Gastrocnemius medialis (tissue), 4 donors: ENCODE measurements at regions of chr11 and their contacts with region 1.

Region 1: GRCh38 chr11:88543902-88544655 is 206.5 kb upstream of the CTSC start:
- DNase-seq: peak; percentile 28 to 48
- ATAC-seq: peak; percentile 86 to 90
- H3K4me3 ChIP-seq: no peak overlapping the region
- H3K27ac ChIP-seq: no peak overlapping the region
- H3K4me1 ChIP-seq: no peaks in the 10 kb centered on the region
- H3K27me3 ChIP-seq: no peaks in the 10 kb centered on the region
- CTCF ChIP-seq: peak; percentile 60 to 84 (median 79)
- POLR2A ChIP-seq: no peak

Region 2: DNA sequence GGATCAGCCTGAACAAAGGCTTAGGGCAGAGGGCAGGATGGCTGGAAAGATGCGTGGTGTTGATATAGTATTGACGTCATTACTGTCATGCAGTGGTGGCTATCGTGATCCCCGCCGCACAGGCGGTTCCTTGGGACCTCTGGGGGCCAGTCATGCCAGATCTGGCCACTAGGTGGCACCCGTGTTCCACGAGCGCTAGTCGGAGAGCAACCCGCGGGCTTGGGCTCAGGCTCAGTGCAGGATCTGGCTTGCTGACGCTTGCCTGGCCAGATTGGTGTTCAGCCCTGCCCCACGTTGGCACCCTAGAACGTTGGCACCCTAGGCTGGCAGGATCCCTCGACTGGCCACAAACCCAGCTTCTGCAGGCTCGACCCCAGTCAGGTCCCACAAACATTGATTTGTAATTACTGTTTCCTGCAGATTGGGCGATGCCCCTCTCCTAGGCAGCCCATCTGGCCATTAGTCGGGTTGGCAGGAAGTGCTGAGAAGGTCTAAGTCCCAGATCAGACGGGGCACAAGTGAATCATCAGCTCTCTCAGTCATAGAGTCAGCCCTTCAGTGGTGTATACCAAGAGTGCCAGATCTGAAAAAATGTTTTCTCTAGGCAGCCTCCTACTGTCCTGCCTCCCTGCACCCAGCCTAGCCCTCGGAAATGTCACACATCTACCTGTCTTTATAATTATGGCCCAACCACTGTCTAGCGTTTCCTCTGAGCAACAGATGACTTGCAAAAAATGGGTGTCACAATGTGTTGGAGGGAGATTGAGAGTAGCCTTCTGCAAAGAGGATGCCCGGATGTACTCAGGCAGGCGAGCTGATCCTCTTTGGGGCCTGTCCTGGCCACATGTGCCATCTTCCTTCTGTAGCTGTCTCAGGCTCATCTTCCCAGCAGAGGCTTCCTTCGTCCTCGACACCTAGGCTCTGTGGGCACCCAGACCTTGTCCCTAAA is 1191.0 kb before region 1 on chr11:
- in situ Hi-C with region 1: loop called in 3 of 4 experiments (anchors 10 to 25 kb)
- intact Hi-C with region 1: loop called (anchors 2 kb)
- DNase-seq: peak; percentile 58 to 64
- ATAC-seq: peak; percentile 86 to 91
- H3K4me3 ChIP-seq: peak overlapping the region in 1 of 4 donors; percentile 31
- H3K27ac ChIP-seq: no peak overlapping the region
- H3K4me1 ChIP-seq: peaks cover 0 to 21% of the 10 kb centered on the region in 2 donors
- H3K27me3 ChIP-seq: no peaks in the 10 kb centered on the region
- CTCF ChIP-seq: peak; percentile 95 to 100 (median 98)
- POLR2A ChIP-seq: no peak

Region 3: GRCh38 chr11:88016392-88017170 is 527.5 kb before region 1 on chr11:
- in situ Hi-C with region 1: loop called (anchors 25 kb)
- intact Hi-C with region 1: loop called (anchors 1 kb)
- DNase-seq: peak; percentile 26 to 39
- ATAC-seq: peak in 1 of 2 donors; percentile 58
- H3K4me3 ChIP-seq: no peak overlapping the region
- H3K27ac ChIP-seq: no peak overlapping the region
- H3K4me1 ChIP-seq: peaks cover 0 to 9% of the 10 kb centered on the region in 2 donors
- H3K27me3 ChIP-seq: no peaks in the 10 kb centered on the region
- CTCF ChIP-seq: peak; percentile 30 to 69 (median 60)
- POLR2A ChIP-seq: no peak

Region 4: DNA sequence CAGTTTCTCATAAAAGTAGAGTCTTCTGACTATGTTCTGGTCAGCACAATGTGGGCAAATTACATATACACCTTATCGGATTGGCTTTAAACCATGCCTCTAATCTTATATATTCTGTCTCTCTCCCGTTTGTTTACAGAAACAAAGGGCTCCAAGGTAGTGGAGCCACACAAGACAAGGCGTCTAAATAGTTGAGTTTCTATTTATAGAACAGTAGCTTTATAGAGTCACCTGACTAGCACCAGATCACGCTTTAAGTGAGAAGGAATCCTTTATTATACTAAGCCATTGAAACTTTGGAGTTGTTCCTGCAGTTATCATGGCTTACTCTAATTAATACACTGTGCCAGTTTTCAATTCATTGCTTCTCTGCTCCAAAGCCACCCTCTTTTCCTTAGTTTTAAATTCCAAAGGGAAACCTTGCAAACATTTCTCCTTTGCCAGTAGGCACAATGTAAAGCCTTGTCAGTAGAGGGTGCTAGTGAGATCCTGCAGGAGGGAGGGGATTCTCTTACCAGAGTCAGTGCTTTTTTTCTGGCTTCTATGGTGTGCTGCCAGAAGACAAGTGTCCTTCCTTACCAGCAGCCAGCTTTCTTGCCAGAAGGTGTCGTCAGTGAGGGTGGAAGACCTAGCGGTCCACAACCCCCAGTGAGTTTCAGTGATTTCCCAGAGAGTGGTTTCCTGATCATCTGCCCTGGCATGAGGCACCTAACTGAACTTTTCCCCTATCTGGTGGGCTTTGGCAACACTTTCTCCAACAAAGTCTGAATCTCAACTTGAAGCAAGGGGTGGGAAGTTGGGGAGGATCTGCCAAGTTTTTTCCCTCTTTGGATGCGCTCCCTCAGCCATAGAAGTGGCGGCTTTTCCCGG is 440.5 kb before region 1 on chr11:
- in situ Hi-C with region 1: no loop called
- intact Hi-C with region 1: loop called (anchors 10 kb)
- DNase-seq: no peak
- ATAC-seq: no peak
- H3K4me3 ChIP-seq: no peak overlapping the region
- H3K27ac ChIP-seq: no peak overlapping the region
- H3K4me1 ChIP-seq: no peaks in the 10 kb centered on the region
- H3K27me3 ChIP-seq: no peaks in the 10 kb centered on the region
- CTCF ChIP-seq: peak in 1 of 5 experiments; percentile 29
- POLR2A ChIP-seq: no peak

Region 5: GRCh38 chr11:88231894-88232482 is 312.1 kb before region 1 on chr11:
- in situ Hi-C with region 1: loop called in 2 of 4 experiments (anchors 5 to 10 kb)
- intact Hi-C with region 1: loop called (anchors 1 kb)
- DNase-seq: no peak
- ATAC-seq: no peak
- H3K4me3 ChIP-seq: no peak overlapping the region
- H3K27ac ChIP-seq: no peak overlapping the region
- H3K4me1 ChIP-seq: no peaks in the 10 kb centered on the region
- H3K27me3 ChIP-seq: no peaks in the 10 kb centered on the region
- CTCF ChIP-seq: peak in 4 of 5 experiments; percentile 24 to 63 (median 46)
- POLR2A ChIP-seq: no peak

Region 6: DNA sequence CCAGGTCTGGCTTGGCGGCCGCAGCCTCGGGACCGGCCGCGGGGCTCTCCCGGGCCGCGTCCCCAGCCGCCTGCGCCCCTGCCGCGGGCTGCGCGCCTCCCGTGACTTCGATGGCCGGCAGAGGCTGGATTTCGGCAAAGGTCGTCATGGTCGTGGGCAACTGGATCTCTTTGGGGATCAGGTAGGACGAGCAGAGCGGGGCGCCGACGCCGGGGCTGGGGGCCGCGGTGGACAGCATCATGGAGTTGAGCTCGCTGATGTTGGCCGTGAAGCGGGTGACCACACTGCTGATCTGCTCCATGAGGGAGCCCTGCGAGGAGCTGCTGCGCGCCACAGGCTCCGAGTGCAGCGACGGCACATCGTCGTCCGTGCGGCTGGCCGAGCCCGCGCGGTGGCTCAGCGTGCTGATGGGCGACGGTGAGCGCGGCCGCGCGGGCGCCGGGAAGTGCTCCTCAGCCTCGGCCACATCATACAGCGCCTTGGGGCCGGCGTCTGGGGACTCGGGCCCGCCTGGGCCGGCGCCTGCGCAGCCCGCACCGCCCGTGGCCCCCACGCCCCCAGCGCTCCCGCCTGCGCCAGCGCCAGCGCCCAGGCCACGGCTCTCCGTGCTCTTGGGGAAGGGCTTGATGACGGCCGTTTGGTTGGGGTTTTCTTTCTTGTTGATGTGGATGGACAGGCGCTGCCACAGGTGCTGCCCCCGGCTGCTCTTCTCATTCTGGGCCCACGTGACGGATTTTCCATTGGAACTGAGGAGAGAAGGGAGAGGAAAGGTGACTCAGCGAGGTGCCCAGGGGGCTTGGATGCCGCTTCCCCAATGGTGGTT is 35.1 kb before region 1 on chr11:
- in situ Hi-C with region 1: no loop called
- intact Hi-C with region 1: no loop called
- DNase-seq: no peak
- ATAC-seq: no peak
- H3K4me3 ChIP-seq: peak overlapping the region; percentile 30 to 44 (median 36)
- H3K27ac ChIP-seq: no peak overlapping the region
- H3K4me1 ChIP-seq: no peaks in the 10 kb centered on the region
- H3K27me3 ChIP-seq: peaks cover 0 to 30% (median 12%) of the 10 kb centered on the region in 3 donors
- CTCF ChIP-seq: no peak
- POLR2A ChIP-seq: no peak

Region 7: DNA sequence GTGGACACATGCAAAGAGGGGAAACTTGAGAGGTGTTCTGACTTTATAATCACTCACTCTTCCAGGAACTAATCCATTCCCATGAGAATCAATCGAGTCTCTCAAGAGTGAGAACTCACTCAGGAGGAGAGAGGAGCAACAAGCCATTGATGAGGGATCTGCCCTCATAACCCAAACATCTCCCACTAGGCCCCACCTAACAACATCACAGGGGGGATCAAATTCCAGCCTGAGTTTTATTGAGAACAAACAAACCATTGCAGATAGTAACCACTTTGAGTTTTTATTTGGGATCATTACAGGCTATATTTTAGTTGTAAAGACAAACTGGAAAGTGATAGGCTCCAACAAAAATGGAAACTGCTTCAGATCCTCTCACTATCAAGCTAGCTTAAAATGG is 122.3 kb after region 1 on chr11:
- in situ Hi-C with region 1: no loop called
- intact Hi-C with region 1: no loop called
- DNase-seq: no peak
- ATAC-seq: no peak
- H3K4me3 ChIP-seq: no peak overlapping the region
- H3K27ac ChIP-seq: no peak overlapping the region
- H3K4me1 ChIP-seq: no peaks in the 10 kb centered on the region
- H3K27me3 ChIP-seq: no peaks in the 10 kb centered on the region
- CTCF ChIP-seq: no peak
- POLR2A ChIP-seq: no peak